A673 (cell line): ENCODE measurements at regions of chr14 and their contacts with region 1.

Region 1: DNA sequence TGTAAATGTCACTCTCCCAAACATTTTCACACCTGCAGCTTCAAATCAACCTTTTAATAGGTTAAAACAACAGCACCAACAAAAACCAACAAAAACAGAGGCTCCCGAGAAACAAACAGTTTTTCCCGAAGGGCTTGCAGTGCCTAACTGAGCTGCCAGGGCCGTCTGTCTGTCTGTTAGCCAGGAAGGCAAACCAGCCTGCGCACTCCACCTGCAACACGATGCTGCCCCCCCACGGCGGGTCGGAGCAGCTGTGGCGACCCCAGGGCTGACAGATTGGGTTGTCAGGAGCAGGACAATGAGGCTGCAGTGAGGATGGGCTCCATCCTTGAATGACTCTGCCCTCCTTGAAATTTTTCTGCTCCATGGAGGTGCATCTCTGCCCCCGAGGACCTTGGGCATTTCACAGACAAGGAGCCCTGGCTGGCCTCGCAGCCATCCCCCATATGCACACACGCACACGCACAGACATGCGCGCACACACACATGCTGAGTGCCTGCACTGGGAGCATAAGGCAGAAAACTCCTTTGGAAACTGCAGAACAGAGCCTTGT is 2.6 kb downstream of the RTL1 start:
- DNase-seq: peak; percentile 33
- H3K4me3 ChIP-seq: no peak overlapping the region
- H3K27ac ChIP-seq: no peak overlapping the region
- H3K4me1 ChIP-seq: peaks cover 39% of the 10 kb centered on the region
- H3K27me3 ChIP-seq: peaks cover 13% of the 10 kb centered on the region
- CTCF ChIP-seq: peak; percentile 56

Region 2: GRCh38 chr14:101235335-101236103 is 334.6 kb after region 1 on chr14:
- CTCF ChIA-PET with region 1: interaction called, 4 read pairs
- POLR2A ChIA-PET with region 1: no interaction called
- intact Hi-C with region 1: loop called (anchors 10 kb)
- DNase-seq: peak; percentile 55
- H3K4me3 ChIP-seq: no peak overlapping the region
- H3K27ac ChIP-seq: no peak overlapping the region
- H3K4me1 ChIP-seq: no peaks in the 10 kb centered on the region
- H3K27me3 ChIP-seq: peaks cover 2% of the 10 kb centered on the region
- CTCF ChIP-seq: peak; percentile 74

Region 3: GRCh38 chr14:101628471-101628966 is 727.6 kb after region 1 on chr14:
- CTCF ChIA-PET with region 1: no interaction called
- POLR2A ChIA-PET with region 1: no interaction called
- intact Hi-C with region 1: loop called (anchors 5 kb)
- DNase-seq: peak; percentile 83
- H3K4me3 ChIP-seq: peak overlapping the region; percentile 30
- H3K27ac ChIP-seq: no peak overlapping the region
- H3K4me1 ChIP-seq: peaks cover 6% of the 10 kb centered on the region
- H3K27me3 ChIP-seq: peaks cover 3% of the 10 kb centered on the region
- CTCF ChIP-seq: peak; percentile 95

Region 4: GRCh38 chr14:102034301-102034700 is 1133.4 kb after region 1 on chr14:
- CTCF ChIA-PET with region 1: no interaction called
- POLR2A ChIA-PET with region 1: no interaction called
- intact Hi-C with region 1: no loop called
- DNase-seq: no peak
- H3K4me3 ChIP-seq: no peak overlapping the region
- H3K27ac ChIP-seq: no peak overlapping the region
- H3K4me1 ChIP-seq: peaks cover 6% of the 10 kb centered on the region
- H3K27me3 ChIP-seq: no peaks in the 10 kb centered on the region
- CTCF ChIP-seq: no peak